CD4-positive, alpha-beta T cell (primary cell): ENCODE measurements at regions of chr20 and their contacts with region 1.

Region 1: DNA sequence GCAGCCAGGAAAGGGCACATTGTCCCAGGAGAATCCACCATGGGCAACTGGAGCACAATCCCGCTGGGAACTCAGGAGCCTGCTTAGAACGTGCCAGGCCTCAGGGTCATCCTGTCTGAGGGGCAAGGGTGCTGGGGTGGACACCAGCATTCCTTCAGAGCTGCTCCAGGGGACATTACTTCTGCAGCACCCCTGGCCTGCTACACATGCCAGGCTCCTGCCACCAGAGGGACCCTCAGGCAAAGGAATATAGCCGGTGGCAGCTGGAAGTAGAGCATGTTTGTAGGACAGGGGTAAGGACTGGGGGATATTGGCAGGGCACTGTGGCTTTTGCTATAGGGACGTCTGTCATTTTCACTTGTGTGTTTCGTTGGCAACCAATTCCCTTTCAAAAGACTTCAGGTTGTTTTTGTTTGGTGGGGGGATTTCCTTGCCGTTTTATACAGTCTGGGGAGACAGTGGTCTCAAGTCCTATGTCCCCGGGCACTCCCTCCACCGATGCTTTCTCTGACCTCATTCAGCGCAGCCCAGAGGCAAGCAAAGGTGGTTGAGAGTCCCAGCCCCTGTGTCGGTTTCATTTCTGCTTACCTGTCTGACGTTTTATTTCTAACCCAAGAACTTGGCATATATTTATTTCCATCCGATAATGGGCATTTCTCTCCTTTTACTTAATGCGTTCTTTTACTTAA is 130.8 kb downstream of the JPH2 start:
- DNase-seq: peak; percentile 53 to 83 (median 65)
- ATAC-seq: peak; percentile 97
- H3K4me3 ChIP-seq: no peak overlapping the region
- H3K4me3 Mint-ChIP-seq: no peak overlapping the region
- H3K27ac ChIP-seq: no peak overlapping the region
- H3K27ac Mint-ChIP-seq: peak overlapping the region; percentile 15
- H3K4me1 ChIP-seq: peaks cover 12% of the 10 kb centered on the region
- H3K4me1 Mint-ChIP-seq: peaks cover 38% of the 10 kb centered on the region
- H3K27me3 ChIP-seq: no peaks in the 10 kb centered on the region
- H3K27me3 Mint-ChIP-seq: no peaks in the 10 kb centered on the region
- CTCF ChIP-seq: peak; percentile 71

Region 2: GRCh38 chr20:44028868-44029847 is 27.0 kb before region 1 on chr20:
- CTCF ChIA-PET with region 1: no interaction called
- POLR2A ChIA-PET with region 1: no interaction called
- intact Hi-C with region 1: no loop called
- DNase-seq: peak in 3 of 14 experiments; percentile 6 to 14 (median 11)
- ATAC-seq: no peak
- H3K4me3 ChIP-seq: no peak overlapping the region
- H3K4me3 Mint-ChIP-seq: no peak overlapping the region
- H3K27ac ChIP-seq: no peak overlapping the region
- H3K27ac Mint-ChIP-seq: no peak overlapping the region
- H3K4me1 ChIP-seq: peaks cover 33% of the 10 kb centered on the region
- H3K4me1 Mint-ChIP-seq: peaks cover 31% of the 10 kb centered on the region
- H3K27me3 ChIP-seq: peaks cover 0 to 2% of the 10 kb centered on the region in 2 experiments
- H3K27me3 Mint-ChIP-seq: no peaks in the 10 kb centered on the region
- CTCF ChIP-seq: no peak

Region 3: GRCh38 chr20:44092551-44093248 is 36.5 kb after region 1 on chr20:
- CTCF ChIA-PET with region 1: no interaction called
- POLR2A ChIA-PET with region 1: no interaction called
- intact Hi-C with region 1: loop called (anchors 5 kb)
- DNase-seq: peak in 5 of 14 experiments; percentile 27 to 59 (median 45)
- ATAC-seq: peak; percentile 52
- H3K4me3 ChIP-seq: no peak overlapping the region
- H3K4me3 Mint-ChIP-seq: no peak overlapping the region
- H3K27ac ChIP-seq: no peak overlapping the region
- H3K27ac Mint-ChIP-seq: no peak overlapping the region
- H3K4me1 ChIP-seq: peaks cover 4% of the 10 kb centered on the region
- H3K4me1 Mint-ChIP-seq: no peaks in the 10 kb centered on the region
- H3K27me3 ChIP-seq: peaks cover 0 to 10% of the 10 kb centered on the region in 2 experiments
- H3K27me3 Mint-ChIP-seq: peaks cover 21% of the 10 kb centered on the region
- CTCF ChIP-seq: peak; percentile 55

Region 4: DNA sequence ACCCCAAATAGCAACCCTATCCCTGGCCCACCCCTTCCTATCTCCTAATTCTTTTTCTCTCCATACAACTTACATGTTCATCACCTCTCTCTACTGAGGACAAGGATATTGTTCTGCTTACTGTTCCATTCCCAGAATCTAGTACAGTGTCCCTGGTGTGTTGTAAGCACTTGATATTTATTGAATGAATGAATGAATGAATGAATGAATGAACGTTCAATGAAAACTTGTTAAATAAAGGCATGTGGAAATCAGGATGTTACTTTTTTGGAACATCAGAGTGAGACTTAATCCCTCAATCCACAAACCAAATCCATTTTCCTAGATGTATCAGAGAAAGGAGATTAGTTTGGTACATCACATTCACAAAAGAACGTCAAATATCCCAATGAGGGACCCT is 137.6 kb after region 1 on chr20:
- CTCF ChIA-PET with region 1: interaction called, 3 read pairs
- POLR2A ChIA-PET with region 1: no interaction called
- intact Hi-C with region 1: loop called in 1 of 2 experiments (anchors 5 kb)
- DNase-seq: no peak
- ATAC-seq: no peak
- H3K4me3 ChIP-seq: no peak overlapping the region
- H3K4me3 Mint-ChIP-seq: no peak overlapping the region
- H3K27ac ChIP-seq: no peak overlapping the region
- H3K27ac Mint-ChIP-seq: no peak overlapping the region
- H3K4me1 ChIP-seq: peaks cover 4% of the 10 kb centered on the region
- H3K4me1 Mint-ChIP-seq: peaks cover 4% of the 10 kb centered on the region
- H3K27me3 ChIP-seq: peaks cover 0 to 13% of the 10 kb centered on the region in 2 experiments
- H3K27me3 Mint-ChIP-seq: peaks cover 15% of the 10 kb centered on the region
- CTCF ChIP-seq: no peak